MCF 10A (cell line): ENCODE measurements at regions of chr6 and their contacts with region 1.

Region 1: GRCh38 chr6:170438402-170438753 is 114.7 kb downstream of the PSMB1 start:
- DNase-seq: peak; percentile 99
- H3K4me3 Mint-ChIP-seq: no peak overlapping the region
- H3K27ac Mint-ChIP-seq: peak overlapping the region; percentile 86
- H3K4me1 Mint-ChIP-seq: peaks cover 10% of the 10 kb centered on the region
- H3K27me3 Mint-ChIP-seq: no peaks in the 10 kb centered on the region
- CTCF ChIP-seq: no peak

Region 2: DNA sequence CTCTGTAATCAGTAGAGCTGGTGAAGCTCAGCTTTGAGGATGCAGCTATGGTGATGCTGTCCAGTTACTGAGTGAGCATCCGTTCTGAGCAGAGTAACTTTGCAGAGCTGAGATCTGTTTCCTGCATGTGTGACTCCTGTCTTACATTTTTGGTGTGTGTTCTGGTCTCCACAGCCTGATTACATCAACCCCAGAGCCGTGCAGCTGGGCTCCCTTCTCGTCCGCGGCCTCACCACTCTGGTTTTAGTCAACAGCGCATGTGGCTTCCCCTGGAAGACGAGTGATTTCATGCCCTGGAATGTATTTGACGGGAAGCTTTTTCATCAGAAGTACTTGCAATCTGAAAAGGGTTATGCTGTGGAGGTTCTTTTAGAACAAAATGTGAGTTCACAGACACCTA is 50.3 kb before region 1 on chr6:
- CTCF ChIA-PET with region 1: no interaction called
- POLR2A ChIA-PET with region 1: no interaction called
- intact Hi-C with region 1: no loop called
- DNase-seq: no peak
- H3K4me3 Mint-ChIP-seq: no peak overlapping the region
- H3K27ac Mint-ChIP-seq: no peak overlapping the region
- H3K4me1 Mint-ChIP-seq: peaks cover 6% of the 10 kb centered on the region
- H3K27me3 Mint-ChIP-seq: no peaks in the 10 kb centered on the region
- CTCF ChIP-seq: no peak

Region 3: DNA sequence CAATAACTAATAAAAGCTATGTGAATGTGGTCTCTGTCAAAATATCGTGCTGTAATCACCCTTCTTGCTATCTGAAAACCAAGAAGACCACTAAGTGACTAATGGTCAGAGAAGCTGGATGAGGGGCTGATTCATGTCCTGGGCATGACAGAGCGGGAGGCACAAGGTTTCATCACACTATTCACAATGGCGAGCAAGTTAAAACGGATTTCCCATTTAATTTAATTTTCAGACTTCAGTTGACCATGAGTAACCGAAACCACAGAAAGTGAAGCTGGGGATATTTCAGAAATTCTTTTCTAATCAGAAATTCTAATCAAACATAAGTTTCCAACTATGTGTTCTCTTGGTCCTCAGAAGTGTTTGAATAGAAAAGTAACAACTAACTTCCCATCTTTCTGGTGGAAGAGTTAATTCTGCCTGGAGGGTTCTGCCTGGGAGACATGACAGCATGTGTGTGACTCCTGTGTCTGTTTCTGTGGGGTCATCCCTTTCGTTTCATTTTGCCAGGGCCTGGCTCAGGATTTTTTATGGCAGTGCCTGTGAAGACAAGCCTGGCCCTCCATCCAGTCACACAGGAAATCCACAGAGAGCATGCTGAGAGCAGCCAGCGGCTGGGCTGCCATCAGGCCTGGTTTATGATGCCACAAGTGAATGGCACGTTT is 32.9 kb before region 1 on chr6:
- CTCF ChIA-PET with region 1: no interaction called
- POLR2A ChIA-PET with region 1: interaction called, 11 read pairs
- intact Hi-C with region 1: no loop called
- DNase-seq: peak; percentile 75
- H3K4me3 Mint-ChIP-seq: no peak overlapping the region
- H3K27ac Mint-ChIP-seq: peak overlapping the region; percentile 91
- H3K4me1 Mint-ChIP-seq: peaks cover 21% of the 10 kb centered on the region
- H3K27me3 Mint-ChIP-seq: no peaks in the 10 kb centered on the region
- CTCF ChIP-seq: no peak